Astrocyte of the cerebellum (primary cell): ENCODE measurements at regions of chr7 and their contacts with region 1.

Region 1: GRCh38 chr7:96962221-96962885 is 43.0 kb upstream of the DLX6 start:
- DNase-seq: peak; percentile 29
- H3K4me3 ChIP-seq: no peak overlapping the region
- CTCF ChIP-seq: no peak

Region 2: DNA sequence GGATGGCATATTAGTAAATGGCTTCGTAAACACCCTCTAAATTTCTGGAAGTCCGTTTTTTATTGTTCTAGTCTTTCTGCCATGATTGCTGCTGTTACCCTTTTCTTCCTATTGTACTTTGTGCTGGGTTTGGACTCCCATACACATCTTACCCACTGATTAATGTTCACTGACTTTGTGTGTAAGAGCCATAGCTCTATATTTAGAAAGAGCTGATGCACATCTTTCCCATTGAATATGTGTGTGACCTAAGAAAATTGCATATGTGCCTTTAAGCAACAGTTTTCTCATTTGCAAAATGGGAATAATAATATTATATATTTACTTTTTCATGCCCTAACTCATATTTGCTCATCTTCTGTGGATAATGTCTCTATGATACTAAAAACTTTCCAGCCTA is 92.8 kb before region 1 on chr7:
- in situ Hi-C with region 1: no loop called
- DNase-seq: no peak
- H3K4me3 ChIP-seq: no peak overlapping the region
- CTCF ChIP-seq: no peak

Region 3: DNA sequence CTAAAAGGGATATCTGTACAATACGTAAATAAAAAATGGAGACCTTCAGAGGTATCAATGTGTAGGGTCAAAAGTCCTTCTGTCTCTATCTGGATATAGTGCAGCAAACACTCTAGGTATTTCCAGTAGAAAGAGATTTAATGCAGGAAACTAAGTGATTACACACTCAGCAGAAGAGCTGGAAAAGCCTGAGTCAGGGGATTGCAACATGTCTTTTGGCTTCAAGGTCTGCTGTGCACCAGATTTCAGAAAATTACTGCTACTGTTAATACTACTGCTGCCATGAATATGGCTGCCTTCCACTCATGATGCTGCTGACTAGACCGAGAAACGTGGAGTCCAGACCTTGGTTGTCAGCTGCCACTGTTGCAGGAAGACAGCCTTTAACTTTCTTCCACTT is 51.9 kb before region 1 on chr7:
- in situ Hi-C with region 1: loop called (anchors 5 kb)
- DNase-seq: no peak
- H3K4me3 ChIP-seq: no peak overlapping the region
- CTCF ChIP-seq: no peak